ENCODE measurements at regions of chr6 and their contacts with region 1.

Region 1: GRCh38 chr6:122491919-122492555 is 20.4 kb upstream of the SERINC1 start:
- DNase-seq: peak; percentile 76
- H3K4me3 Mint-ChIP-seq: no peak overlapping the region
- H3K27ac Mint-ChIP-seq: no peak overlapping the region
- H3K4me1 Mint-ChIP-seq: peaks cover 14% of the 10 kb centered on the region
- H3K27me3 Mint-ChIP-seq: peaks cover 2% of the 10 kb centered on the region

Region 2: DNA sequence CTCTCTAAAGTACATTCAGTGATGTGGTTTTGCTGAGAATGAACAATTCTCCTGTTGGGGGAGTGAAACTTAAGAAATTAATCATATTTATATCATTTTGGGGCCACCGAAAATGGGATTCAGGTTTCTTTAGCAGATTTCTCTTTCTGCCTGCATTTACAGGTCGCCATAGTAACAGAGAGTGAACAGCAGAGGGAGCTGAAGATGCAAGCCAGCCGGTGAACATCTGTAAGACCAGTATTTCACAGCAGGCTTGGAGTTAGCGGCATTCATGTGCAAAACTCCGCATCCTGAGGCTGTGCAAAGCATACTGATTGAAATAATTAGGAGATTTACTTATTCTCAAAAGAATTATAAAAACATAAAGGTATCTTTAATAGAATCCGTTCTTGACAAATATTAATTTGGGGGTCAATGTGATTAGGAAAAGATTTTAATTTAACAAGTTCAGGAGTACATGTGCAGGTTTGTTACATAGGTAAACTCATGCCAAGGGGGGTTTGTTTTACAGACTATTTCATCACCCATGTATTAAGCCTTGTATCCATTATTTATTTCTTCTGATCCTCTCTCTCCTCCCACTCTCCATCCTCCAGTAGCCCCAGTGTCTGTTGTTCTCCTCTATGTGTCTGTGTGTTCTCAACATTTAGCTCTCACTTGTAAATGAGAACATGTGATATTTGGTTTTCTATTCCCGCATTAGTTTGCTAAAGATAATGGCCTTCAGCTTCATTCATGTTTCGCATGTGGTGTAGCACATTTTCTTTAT is 110.4 kb before region 1 on chr6:
- CTCF ChIA-PET with region 1: interaction called, 10 read pairs
- POLR2A ChIA-PET with region 1: no interaction called
- DNase-seq: peak; percentile 51
- H3K4me3 Mint-ChIP-seq: no peak overlapping the region
- H3K27ac Mint-ChIP-seq: no peak overlapping the region
- H3K4me1 Mint-ChIP-seq: no peaks in the 10 kb centered on the region
- H3K27me3 Mint-ChIP-seq: peaks cover 21% of the 10 kb centered on the region

Region 3: GRCh38 chr6:122530440-122531046 is 38.5 kb after region 1 on chr6:
- CTCF ChIA-PET with region 1: interaction called, 131 read pairs
- POLR2A ChIA-PET with region 1: interaction called, 4 read pairs
- DNase-seq: peak; percentile 40
- H3K4me3 Mint-ChIP-seq: no peak overlapping the region
- H3K27ac Mint-ChIP-seq: no peak overlapping the region
- H3K4me1 Mint-ChIP-seq: no peaks in the 10 kb centered on the region
- H3K27me3 Mint-ChIP-seq: peaks cover 31% of the 10 kb centered on the region

Region 4: DNA sequence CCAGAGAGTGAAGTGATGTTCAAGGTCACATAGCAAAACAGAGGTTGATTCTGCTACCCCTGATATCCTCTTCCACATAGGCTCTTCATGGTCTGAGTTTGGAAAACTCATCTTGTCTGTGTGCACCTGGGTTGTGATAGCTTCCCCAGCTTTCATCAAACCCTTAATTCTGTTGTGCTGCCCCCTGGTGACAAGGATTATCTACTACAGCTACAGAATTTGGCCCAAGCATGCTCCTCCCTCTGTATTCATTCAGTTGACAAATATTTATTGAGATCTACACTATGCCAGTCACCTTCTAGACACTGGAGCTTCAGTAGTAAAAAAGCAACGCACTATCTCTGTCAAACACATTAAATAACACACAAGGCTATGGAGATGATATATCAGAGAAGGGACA is 347.4 kb after region 1 on chr6:
- CTCF ChIA-PET with region 1: interaction called, 19 read pairs
- POLR2A ChIA-PET with region 1: no interaction called
- DNase-seq: peak; percentile 45
- H3K4me3 Mint-ChIP-seq: no peak overlapping the region
- H3K27ac Mint-ChIP-seq: no peak overlapping the region
- H3K4me1 Mint-ChIP-seq: no peaks in the 10 kb centered on the region
- H3K27me3 Mint-ChIP-seq: peaks cover 2% of the 10 kb centered on the region

Measured in activated CD4-positive, alpha-beta memory T cell treated with anti-CD3 and anti-CD28 coated beads, Interleukin-2, amount 10 ng/mL, durations not matched to agents 7 days and 5 days (primary cell).